Activated CD8-positive, alpha-beta T cell treated with anti-CD3 and anti-CD28 coated beads, Interleukin-2, amount 10 ng/mL, durations not matched to agents 7 days and 5 days (primary cell): ENCODE measurements at regions of chr15 and their contacts with region 1.

Region 1: DNA sequence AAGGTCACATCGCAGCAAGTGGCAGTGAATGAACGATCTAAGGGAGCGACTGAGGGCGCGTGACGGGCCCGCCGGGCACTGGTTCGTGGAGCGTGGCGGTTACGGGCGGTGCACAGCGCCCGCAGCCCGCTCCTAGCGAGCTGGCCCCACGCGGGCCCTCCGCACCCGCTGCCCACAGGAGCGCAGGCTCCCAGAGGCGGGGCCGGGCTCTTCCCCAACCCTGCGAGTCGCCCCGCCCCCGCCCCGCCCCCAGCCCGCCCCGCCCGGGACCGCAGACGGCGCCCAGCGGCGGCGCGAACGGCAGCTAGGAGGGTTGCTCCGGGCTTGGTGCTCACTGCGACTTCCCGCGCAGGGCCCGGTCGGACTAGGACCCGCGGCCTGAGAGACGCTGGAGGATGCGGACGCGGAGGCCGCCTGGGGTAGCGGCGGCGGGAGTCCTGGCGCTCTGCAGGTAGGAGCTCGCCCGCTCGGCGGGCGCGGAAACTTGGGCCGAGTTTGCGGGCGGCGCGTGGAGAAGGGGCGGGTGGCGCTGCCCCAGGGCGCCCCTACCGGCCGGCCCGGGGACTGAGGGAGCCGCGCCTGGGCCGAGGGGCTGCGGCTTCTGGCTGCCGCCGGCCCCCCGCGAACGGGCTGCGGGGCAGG is at the start of gene C15orf39:
- DNase-seq: peak; percentile 79
- ATAC-seq: peak; percentile 63
- H3K4me3 Mint-ChIP-seq: peak within 1 kb of the TSS; percentile 90
- H3K27ac Mint-ChIP-seq: peak within 1 kb of the TSS; percentile 91
- H3K4me1 Mint-ChIP-seq: peaks cover 63% of the 10 kb centered on the region
- H3K27me3 Mint-ChIP-seq: no peaks in the 10 kb centered on the region
- total RNA-seq, gene C15orf39: 57.2 to 59.4 TPM

Region 2: DNA sequence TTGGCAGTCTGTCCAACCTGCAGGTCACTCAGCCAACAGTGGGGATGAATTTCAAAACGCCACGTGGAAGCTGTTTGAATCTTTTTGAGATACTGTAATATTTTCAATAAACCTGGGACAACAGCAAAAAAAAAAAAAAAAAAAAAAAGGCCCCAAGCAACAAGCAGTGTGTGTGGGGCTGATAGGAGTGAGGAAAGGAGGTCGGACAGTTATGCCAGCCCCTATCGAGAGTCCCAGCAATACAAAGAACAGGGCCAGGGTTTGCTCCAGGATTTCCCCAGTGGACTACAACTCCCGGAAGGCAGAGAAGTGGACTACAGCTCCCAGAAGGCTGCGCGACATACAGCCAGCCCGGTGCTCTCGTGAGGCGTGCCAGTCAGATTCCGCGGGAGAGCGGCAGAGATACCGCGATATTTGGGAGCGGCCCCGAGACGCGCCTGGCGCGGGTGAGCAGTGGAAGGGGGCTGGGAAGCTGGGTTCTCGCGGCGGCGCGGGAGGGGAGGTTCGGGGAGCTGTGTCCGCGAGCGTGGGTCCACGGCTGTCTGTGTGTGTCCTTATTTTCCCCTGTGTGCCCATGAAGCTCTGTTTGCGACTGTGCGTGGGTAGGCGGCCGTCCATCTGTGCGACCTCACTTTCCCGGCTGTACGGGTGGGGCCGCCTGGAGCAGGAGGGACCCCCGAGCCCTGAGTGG is 178.4 kb before region 1 on chr15 and contains the start of gene PPCDC:
- CTCF ChIA-PET with region 1: interaction called, 94 read pairs
- POLR2A ChIA-PET with region 1: interaction called, 23 read pairs
- DNase-seq: peak; percentile 97
- ATAC-seq: peak; percentile 100
- H3K4me3 Mint-ChIP-seq: peak within 1 kb of the TSS; percentile 86
- H3K27ac Mint-ChIP-seq: peak within 1 kb of the TSS; percentile 93
- H3K4me1 Mint-ChIP-seq: peaks cover 26% of the 10 kb centered on the region
- H3K27me3 Mint-ChIP-seq: no peaks in the 10 kb centered on the region
- total RNA-seq, gene PPCDC: 27.3 to 29.1 TPM

Region 3: DNA sequence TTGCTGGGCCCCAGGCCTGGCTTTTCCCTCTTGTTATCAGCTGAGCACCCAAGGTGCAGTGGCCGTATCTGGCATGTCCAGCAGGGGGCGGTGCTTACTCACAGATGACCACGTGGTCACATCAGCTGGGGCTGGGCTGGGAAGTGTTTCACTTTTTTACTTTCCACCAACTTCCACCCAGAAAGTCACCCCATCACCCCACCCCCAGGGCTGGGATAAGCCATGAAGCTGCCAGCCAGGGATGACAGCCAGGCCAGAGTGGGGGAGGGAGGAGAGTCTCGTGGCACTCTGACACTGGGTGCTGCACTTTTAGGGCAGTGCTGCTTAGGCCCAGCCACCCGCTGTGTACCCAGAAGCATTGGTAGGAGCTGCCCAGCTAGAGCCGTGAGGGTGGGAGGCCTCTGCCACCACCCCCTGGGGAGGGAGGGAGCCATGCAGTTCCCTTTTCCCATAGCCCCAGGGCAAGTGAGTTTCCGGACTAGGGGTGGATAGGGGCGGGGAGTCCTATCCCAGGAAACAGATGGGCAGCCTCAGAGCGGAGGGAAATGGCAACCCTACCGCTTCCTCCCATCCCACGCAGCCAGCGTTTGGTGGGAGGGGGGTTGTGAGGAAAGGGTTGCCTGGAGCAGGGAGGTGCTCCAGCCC is 172.2 kb before region 1 on chr15:
- CTCF ChIA-PET with region 1: interaction called, 94 read pairs
- POLR2A ChIA-PET with region 1: interaction called, 23 read pairs
- DNase-seq: peak; percentile 91
- ATAC-seq: peak; percentile 85
- H3K4me3 Mint-ChIP-seq: no peak overlapping the region
- H3K27ac Mint-ChIP-seq: peak overlapping the region; percentile 75
- H3K4me1 Mint-ChIP-seq: peaks cover 48% of the 10 kb centered on the region
- H3K27me3 Mint-ChIP-seq: no peaks in the 10 kb centered on the region

Region 4: DNA sequence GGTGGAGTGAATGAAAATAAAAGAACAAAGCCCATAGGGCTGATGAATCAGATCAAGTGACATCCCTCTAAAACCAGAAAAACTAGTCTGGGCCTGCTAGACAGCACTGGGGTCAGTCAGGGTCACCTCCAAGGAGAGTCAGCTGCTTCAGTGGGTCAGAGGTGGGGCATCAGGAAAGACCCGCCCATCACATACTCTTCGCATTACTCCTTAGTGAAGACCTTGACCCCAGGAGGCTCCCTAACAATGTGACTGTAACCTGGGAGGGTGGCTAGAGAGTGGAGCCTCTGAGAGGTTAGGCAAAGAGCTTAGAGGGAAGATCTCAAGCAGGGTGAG is 165.4 kb before region 1 on chr15:
- CTCF ChIA-PET with region 1: interaction called, 45 read pairs
- POLR2A ChIA-PET with region 1: interaction called, 4 read pairs
- DNase-seq: no peak
- ATAC-seq: no peak
- H3K4me3 Mint-ChIP-seq: no peak overlapping the region
- H3K27ac Mint-ChIP-seq: peak overlapping the region; percentile 69
- H3K4me1 Mint-ChIP-seq: peaks cover 70% of the 10 kb centered on the region
- H3K27me3 Mint-ChIP-seq: no peaks in the 10 kb centered on the region

Region 5: GRCh38 chr15:75069301-75069925 is 132.3 kb before region 1 on chr15:
- CTCF ChIA-PET with region 1: interaction called, 14 read pairs
- POLR2A ChIA-PET with region 1: interaction called, 10 read pairs
- DNase-seq: no peak
- ATAC-seq: no peak
- H3K4me3 Mint-ChIP-seq: no peak overlapping the region
- H3K27ac Mint-ChIP-seq: peak overlapping the region; percentile 37
- H3K4me1 Mint-ChIP-seq: peaks cover 56% of the 10 kb centered on the region
- H3K27me3 Mint-ChIP-seq: no peaks in the 10 kb centered on the region

Region 6: GRCh38 chr15:75107908-75108838 is 93.6 kb before region 1 on chr15:
- CTCF ChIA-PET with region 1: interaction called, 14 read pairs
- POLR2A ChIA-PET with region 1: interaction called, 15 read pairs
- DNase-seq: peak; percentile 85
- ATAC-seq: peak; percentile 80
- H3K4me3 Mint-ChIP-seq: peak overlapping the region; percentile 27
- H3K27ac Mint-ChIP-seq: peak overlapping the region; percentile 89
- H3K4me1 Mint-ChIP-seq: peaks cover 57% of the 10 kb centered on the region
- H3K27me3 Mint-ChIP-seq: peaks cover 11% of the 10 kb centered on the region

Region 7: DNA sequence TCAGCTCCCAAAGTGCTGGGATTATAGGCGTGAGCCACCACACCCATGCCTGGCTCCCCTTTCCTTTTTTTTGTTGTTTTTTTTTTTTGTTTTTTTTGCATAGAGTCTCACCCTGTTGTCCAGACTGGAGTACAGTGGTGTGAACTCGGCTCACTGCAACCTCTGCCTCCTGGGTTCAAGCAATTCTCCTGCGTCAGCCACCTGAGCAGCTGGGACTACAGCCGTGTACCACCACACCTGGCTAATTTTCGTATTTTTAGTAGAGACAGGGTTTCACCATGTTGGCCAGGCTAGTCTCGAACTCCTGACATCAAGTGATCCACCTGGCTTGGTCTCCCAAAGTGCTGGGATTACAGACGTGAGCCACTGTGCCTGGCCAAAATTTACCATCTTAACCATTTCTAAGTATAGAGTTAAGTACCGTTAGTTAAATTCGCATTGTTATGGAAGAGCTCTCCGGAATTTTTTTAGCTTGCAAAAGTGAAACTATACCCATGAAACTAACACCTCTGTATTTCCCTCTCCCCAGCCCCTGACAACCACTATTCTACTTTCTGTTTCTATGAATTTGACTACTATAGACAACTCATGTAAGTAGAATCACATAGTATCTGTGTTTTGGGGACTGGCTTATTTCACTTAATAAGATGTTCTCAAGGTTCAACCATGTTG is 71.0 kb before region 1 on chr15:
- CTCF ChIA-PET with region 1: interaction called, 19 read pairs
- POLR2A ChIA-PET with region 1: interaction called, 13 read pairs
- DNase-seq: peak; percentile 62
- ATAC-seq: peak; percentile 97
- H3K4me3 Mint-ChIP-seq: peak overlapping the region; percentile 74
- H3K27ac Mint-ChIP-seq: peak overlapping the region; percentile 88
- H3K4me1 Mint-ChIP-seq: peaks cover 44% of the 10 kb centered on the region
- H3K27me3 Mint-ChIP-seq: peaks cover 2% of the 10 kb centered on the region